ENCODE measurements at regions of chr12 and their contacts with region 1.

Region 1: GRCh38 chr12:47963340-47964040 is at the start of gene TMEM106C:
- DNase-seq: peak; percentile 48 to 95
- H3K4me3 ChIP-seq: peak within 1 kb of the TSS; percentile 81 to 96
- H3K27ac ChIP-seq: peak within 1 kb of the TSS; percentile 53 to 60
- H3K4me1 ChIP-seq: peaks cover 3 to 16% of the 10 kb centered on the region in 2 donors
- H3K27me3 ChIP-seq: no peaks in the 10 kb centered on the region
- CTCF ChIP-seq: peak; percentile 91 to 99 (median 98)
- total RNA-seq, gene TMEM106C: 120 TPM

Region 2: DNA sequence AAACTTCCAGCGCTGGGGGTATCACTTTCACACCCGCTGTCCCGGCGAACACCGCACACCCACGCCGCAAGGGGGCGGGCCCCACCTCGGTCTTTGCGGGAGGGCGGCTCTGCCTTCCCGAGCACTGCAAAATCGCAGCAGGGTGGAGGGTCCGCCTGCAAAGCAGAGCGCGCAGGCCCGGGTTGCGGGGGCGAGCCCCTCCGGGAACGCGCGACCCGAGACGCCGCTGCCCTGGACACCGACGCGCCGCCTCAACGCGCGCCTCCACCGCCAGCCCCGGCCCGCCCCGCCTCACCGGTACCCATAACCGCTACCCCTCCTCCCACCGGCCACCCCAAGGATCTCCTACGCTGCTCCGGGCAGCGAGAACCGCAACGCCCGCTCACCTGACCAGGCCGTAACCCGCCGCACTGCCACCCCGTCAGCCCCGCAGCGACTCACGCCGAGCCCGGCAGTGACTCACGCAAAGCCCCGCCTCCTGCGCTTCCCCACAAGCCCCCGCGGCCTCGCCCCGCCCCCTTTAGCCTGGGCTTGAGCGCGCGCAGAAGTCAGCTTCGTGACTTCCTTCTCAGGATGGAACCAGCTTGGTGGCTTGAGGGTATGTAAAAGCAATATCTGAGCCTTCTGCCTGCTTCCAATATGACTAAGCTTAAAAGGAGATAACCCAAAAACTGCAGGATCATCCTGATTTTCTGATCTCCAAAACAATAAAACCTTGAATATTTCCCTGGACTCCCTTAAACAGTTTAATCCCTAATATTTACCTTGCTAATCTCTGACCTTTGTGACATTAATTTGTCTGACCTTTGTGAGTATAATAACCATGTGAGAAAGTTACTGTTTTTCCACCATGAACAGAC is 257.7 kb before region 1 on chr12 and contains the start of gene RPAP3:
- intact Hi-C with region 1: loop called (anchors 10 kb)
- DNase-seq: peak; percentile 85 to 98
- H3K4me3 ChIP-seq: peak within 1 kb of the TSS; percentile 94 to 95
- H3K27ac ChIP-seq: peak within 1 kb of the TSS; percentile 78 to 94
- H3K4me1 ChIP-seq: peaks cover 0 to 6% of the 10 kb centered on the region in 2 donors
- H3K27me3 ChIP-seq: no peaks in the 10 kb centered on the region
- CTCF ChIP-seq: peak; percentile 50 to 68 (median 66)
- total RNA-seq, gene RPAP3: 8.1 TPM

Region 3: GRCh38 chr12:47808050-47808449 is 155.4 kb before region 1 on chr12:
- intact Hi-C with region 1: no loop called
- DNase-seq: peak in 1 of 2 donors; percentile 82
- H3K4me3 ChIP-seq: peak overlapping the region; percentile 16 to 39
- H3K27ac ChIP-seq: peak overlapping the region; percentile 97
- H3K4me1 ChIP-seq: peaks cover 60 to 94% of the 10 kb centered on the region in 2 donors
- H3K27me3 ChIP-seq: no peaks in the 10 kb centered on the region
- CTCF ChIP-seq: no peak